ENCODE measurements at regions of chr2 and their contacts with region 1.

Region 1: DNA sequence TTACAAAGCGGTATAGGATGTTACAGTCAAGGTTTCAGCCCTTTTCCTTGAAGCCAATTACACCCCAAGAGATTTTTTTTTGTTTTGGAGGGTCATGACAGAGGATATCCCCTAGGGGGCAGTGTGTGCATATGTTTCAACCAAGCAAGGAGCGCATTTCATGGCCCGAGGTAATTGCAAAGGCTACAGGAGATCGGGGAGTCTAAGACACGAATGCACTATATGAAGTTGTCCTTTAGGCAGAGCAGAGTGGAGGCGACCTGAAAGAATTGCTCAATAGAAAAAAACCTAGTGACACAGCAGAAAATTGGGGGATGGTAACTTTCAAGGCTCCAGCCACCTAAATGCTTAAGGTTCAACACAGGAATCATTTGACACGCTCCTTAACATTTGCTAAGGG is 219.8 kb upstream of the PARD3B start:
- DNase-seq: peak in 4 of 5 donors; percentile 49 to 66 (median 56)
- ATAC-seq: peak; percentile 28 to 70 (median 46)
- H3K4me3 ChIP-seq: no peak overlapping the region
- H3K27ac ChIP-seq: no peak overlapping the region
- H3K4me1 ChIP-seq: peaks cover 0 to 18% (median 7%) of the 10 kb centered on the region in 12 donors
- H3K27me3 ChIP-seq: no peaks in the 10 kb centered on the region
- CTCF ChIP-seq: peak; percentile 76 to 93 (median 88)
- POLR2A ChIP-seq: no peak

Region 2: DNA sequence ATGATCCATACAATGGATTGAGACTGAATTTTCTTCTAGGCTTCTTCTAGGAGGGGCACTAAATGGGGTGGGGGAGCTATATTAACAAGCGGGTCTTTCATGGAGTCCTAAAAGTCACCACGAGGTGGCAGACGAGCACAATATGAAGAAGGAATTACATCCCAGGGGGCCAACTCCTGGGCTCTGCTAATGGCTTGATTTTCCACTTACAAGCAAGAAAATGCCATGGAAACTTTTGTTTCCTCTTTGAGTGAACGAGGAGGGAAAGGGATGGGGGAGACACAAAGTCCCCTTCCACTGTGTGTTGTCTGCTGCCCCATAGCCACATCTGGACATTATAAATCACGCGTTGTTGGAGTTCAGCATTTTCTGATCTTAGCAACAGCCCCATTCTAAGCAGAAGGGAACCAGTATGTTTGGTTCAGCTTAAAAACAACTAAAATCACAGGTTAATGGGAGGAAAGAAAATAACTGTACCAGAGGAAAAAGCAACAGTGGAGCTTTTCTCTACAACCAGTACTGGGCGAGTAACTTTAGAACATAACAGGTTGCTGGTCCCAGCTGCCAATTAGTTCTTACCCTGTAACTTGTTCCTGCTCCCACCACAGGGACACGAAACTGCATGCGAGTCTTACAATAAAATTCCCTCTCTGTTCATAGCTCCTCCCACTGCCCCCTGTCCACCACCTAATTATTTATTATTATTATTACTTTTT is 65.1 kb before region 1 on chr2:
- intact Hi-C with region 1: loop called in 2 of 10 experiments (anchors 5 kb)
- DNase-seq: peak in 4 of 5 donors; percentile 50 to 70 (median 56)
- ATAC-seq: peak; percentile 65 to 82 (median 73)
- H3K4me3 ChIP-seq: peak overlapping the region in 1 of 12 donors; percentile 4
- H3K27ac ChIP-seq: peak overlapping the region in 1 of 12 donors; percentile 11
- H3K4me1 ChIP-seq: peaks cover 0 to 18% (median 9%) of the 10 kb centered on the region in 12 donors
- H3K27me3 ChIP-seq: peaks cover 0 to 3% (median 0%) of the 10 kb centered on the region in 9 donors
- CTCF ChIP-seq: peak; percentile 61 to 84 (median 78)
- POLR2A ChIP-seq: no peak

Region 3: GRCh38 chr2:205670293-205670692 is 1344.8 kb after region 1 on chr2:
- intact Hi-C with region 1: loop called in 6 of 10 experiments (anchors 5 kb)
- DNase-seq: no peak
- ATAC-seq: no peak
- H3K4me3 ChIP-seq: no peak overlapping the region
- H3K27ac ChIP-seq: no peak overlapping the region
- H3K4me1 ChIP-seq: peaks cover 0 to 2% (median 0%) of the 10 kb centered on the region in 12 donors
- H3K27me3 ChIP-seq: no peaks in the 10 kb centered on the region
- CTCF ChIP-seq: no peak
- POLR2A ChIP-seq: no peak

Region 4: DNA sequence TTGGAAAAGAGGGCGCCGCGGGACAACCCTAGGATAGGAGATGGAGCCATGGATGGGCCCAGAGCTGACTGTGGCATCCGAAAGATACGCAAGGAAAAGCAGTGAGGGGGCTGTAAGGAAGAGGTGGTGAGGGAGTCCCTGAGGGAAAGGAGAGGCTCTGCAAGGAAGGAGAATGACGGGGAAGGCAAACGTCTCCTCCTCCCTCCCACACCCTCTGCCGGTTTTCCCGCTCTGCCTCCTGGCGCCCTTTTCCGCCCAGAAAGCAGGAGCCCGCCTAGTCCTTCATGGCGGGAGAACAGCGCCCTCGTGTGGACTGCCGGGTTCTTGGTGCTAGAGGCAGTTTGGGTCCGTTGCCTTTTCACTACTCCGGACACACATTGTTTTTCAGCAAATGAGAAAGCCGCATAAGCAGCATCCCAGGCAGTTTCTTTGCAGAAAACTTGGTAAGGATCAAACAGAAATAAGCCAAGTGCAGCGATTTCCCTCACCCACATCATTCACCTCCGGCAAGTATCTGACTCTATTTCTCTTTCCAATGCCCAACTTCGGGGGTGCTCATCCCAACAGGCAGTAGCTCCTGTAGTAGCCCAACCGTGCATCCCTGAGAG is 1560.1 kb after region 1 on chr2:
- intact Hi-C with region 1: loop called in 1 of 10 experiments (anchors 10 kb)
- DNase-seq: peak; percentile 75 to 93 (median 86)
- ATAC-seq: peak; percentile 75 to 96 (median 88)
- H3K4me3 ChIP-seq: no peak overlapping the region
- H3K27ac ChIP-seq: peak overlapping the region in 1 of 12 donors; percentile 40
- H3K4me1 ChIP-seq: no peaks in the 10 kb centered on the region
- H3K27me3 ChIP-seq: no peaks in the 10 kb centered on the region
- CTCF ChIP-seq: peak; percentile 80 to 92 (median 85)
- POLR2A ChIP-seq: no peak

Region 5: DNA sequence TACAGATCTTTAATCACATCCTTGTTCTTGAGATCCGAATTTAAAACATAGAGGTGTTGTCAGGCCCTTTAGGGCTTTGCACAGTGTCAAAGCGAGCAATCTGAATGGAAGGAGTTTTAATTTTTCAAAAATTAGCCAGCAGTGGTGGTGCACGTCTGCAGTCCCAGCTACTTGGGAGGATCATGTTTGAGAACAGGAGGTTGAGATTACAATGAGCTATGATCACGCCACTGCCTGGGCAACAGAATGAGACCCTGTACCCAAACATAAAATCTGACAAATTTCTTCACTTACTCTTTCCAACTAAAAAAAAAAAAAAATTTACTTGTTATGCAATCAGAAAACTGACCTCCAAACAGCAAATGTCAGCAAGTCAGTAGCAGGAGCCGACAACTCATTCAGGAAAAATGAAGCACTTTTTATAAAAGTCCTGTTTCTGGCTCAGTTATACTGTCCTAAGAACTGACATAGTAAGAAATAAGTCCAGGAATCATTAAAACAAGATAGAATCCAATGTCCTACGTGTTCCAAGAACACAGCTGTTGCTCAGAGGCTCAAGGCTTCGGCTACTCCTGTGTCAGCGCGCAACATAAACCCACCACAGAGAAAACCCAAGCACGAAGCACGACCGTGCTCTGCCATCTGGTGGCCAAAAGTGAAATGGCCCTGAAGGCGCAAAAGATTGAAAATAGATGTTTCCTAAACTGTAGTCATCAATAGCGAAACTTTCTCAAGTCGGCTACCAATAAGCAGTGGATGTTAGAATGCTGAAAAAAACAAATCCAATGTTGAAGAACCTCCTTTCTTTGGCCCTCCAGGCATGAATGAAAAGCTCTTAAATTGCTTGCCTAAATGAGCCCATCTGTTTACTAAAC is 1622.4 kb after region 1 on chr2:
- intact Hi-C with region 1: loop called in 2 of 10 experiments (anchors 5 kb)
- DNase-seq: peak in 4 of 5 donors; percentile 57 to 73 (median 62)
- ATAC-seq: peak; percentile 87 to 91 (median 90)
- H3K4me3 ChIP-seq: no peak overlapping the region
- H3K27ac ChIP-seq: peak overlapping the region in 4 of 12 donors; percentile 1 to 46 (median 8)
- H3K4me1 ChIP-seq: peaks cover 0 to 22% (median 0%) of the 10 kb centered on the region in 12 donors
- H3K27me3 ChIP-seq: no peaks in the 10 kb centered on the region
- CTCF ChIP-seq: peak; percentile 85 to 97 (median 92)
- POLR2A ChIP-seq: no peak

Measured in heart left ventricle (tissue), 16 donors.